CD4-positive, alpha-beta memory T cell (primary cell): ENCODE measurements at regions of chr3 and their contacts with region 1.

Region 1: GRCh38 chr3:152298393-152299242 is 29.9 kb downstream of the MBNL1 start:
- DNase-seq: peak; percentile 81 to 84 (median 82)
- H3K4me3 ChIP-seq: peak overlapping the region; percentile 23 to 29
- H3K4me3 Mint-ChIP-seq: peak overlapping the region; percentile 64 to 87 (median 78)
- H3K27ac ChIP-seq: peak overlapping the region; percentile 54
- H3K27ac Mint-ChIP-seq: peak overlapping the region; percentile 88 to 97 (median 92)
- H3K4me1 ChIP-seq: peaks cover 98% of the 10 kb centered on the region
- H3K4me1 Mint-ChIP-seq: peaks cover 62 to 82% (median 72%) of the 10 kb centered on the region in 4 donors
- H3K27me3 ChIP-seq: no peaks in the 10 kb centered on the region
- H3K27me3 Mint-ChIP-seq: no peaks in the 10 kb centered on the region

Region 2: DNA sequence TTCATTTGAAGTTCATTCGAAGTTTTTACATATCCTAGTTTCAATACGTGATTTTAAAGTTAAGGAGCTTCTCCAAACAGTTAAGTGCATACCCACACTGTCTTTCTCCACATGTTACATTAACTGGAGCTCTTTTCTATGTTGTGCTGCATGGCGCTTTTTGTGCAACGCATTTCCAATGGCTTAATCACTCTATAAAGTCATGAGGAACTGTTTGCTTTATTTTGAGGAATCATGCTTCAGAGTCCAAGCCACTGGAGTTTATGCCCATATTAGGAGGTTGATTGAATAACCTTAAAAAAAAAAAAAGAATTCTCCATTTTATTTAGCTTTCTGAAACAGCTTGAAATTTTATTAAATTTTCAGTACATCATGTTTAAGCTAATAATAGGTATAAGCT is 139.3 kb before region 1 on chr3:
- CTCF ChIA-PET with region 1: no interaction called
- POLR2A ChIA-PET with region 1: no interaction called
- intact Hi-C with region 1: no loop called
- DNase-seq: no peak
- H3K4me3 ChIP-seq: no peak overlapping the region
- H3K4me3 Mint-ChIP-seq: no peak overlapping the region
- H3K27ac ChIP-seq: no peak overlapping the region
- H3K27ac Mint-ChIP-seq: no peak overlapping the region
- H3K4me1 ChIP-seq: no peaks in the 10 kb centered on the region
- H3K4me1 Mint-ChIP-seq: peaks cover 0 to 6% (median 4%) of the 10 kb centered on the region in 4 donors
- H3K27me3 ChIP-seq: no peaks in the 10 kb centered on the region
- H3K27me3 Mint-ChIP-seq: no peaks in the 10 kb centered on the region

Region 3: DNA sequence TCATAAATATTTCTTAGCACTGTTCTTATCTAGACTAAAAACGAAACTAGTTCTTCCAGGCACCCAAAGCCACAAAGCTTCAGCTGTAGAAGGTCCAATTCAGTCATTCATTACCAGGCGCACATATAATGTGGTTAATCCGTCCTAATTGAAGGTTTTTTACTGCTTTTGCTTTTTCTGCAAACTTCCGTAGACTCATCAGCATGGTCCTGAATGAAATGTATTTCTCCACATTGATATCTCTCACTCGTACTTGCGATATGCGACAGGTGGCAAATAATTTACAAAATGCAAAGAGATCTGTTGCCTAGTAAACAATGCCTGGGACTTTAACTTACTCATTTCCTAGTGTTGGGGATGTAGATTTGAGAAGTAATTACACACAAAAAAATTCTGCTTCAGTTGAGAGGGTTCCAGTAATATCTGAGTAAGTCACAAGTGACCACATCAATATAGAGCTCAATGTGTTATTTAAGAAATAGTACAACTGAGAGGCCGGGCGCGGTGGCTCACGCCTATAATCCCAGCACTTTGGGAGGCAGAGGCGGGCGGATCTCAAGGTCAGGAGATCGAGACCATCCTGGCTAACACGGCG is 104.8 kb before region 1 on chr3:
- CTCF ChIA-PET with region 1: interaction called, 4 read pairs
- POLR2A ChIA-PET with region 1: interaction called, 14 read pairs
- intact Hi-C with region 1: no loop called
- DNase-seq: peak; percentile 63 to 79 (median 68)
- H3K4me3 ChIP-seq: peak overlapping the region; percentile 31 to 37
- H3K4me3 Mint-ChIP-seq: peak overlapping the region; percentile 81 to 97 (median 90)
- H3K27ac ChIP-seq: peak overlapping the region; percentile 62
- H3K27ac Mint-ChIP-seq: peak overlapping the region; percentile 89 to 98 (median 92)
- H3K4me1 ChIP-seq: peaks cover 82% of the 10 kb centered on the region
- H3K4me1 Mint-ChIP-seq: peaks cover 60 to 85% (median 72%) of the 10 kb centered on the region in 4 donors
- H3K27me3 ChIP-seq: no peaks in the 10 kb centered on the region
- H3K27me3 Mint-ChIP-seq: no peaks in the 10 kb centered on the region

Region 4: DNA sequence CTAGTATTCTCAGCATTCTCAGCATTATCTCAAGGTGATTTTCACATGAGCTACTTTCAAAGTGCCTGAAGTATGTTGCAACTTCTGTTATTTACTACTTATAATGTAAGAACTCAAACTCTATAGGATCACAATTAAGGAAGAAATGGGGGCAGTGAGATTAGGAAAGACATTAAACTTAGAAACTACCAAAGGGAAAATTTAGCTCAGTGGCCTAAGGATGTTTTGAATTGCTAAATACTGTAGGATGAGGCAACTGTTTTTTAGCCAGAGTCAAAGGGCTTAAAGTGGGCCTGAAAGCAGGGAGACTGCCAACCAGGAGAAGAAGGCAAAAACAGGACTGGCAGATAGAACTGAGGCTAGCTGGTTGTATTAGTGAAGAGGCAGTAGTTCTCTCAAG is 85.4 kb before region 1 on chr3:
- CTCF ChIA-PET with region 1: no interaction called
- POLR2A ChIA-PET with region 1: no interaction called
- intact Hi-C with region 1: no loop called
- DNase-seq: no peak
- H3K4me3 ChIP-seq: no peak overlapping the region
- H3K4me3 Mint-ChIP-seq: peak overlapping the region in 2 of 8 donors; percentile 13 to 33
- H3K27ac ChIP-seq: no peak overlapping the region
- H3K27ac Mint-ChIP-seq: peak overlapping the region; percentile 1 to 80 (median 18)
- H3K4me1 ChIP-seq: peaks cover 50% of the 10 kb centered on the region
- H3K4me1 Mint-ChIP-seq: peaks cover 45 to 65% (median 56%) of the 10 kb centered on the region in 4 donors
- H3K27me3 ChIP-seq: no peaks in the 10 kb centered on the region
- H3K27me3 Mint-ChIP-seq: no peaks in the 10 kb centered on the region

Region 5: GRCh38 chr3:152281133-152281713 is 17.4 kb before region 1 on chr3:
- CTCF ChIA-PET with region 1: interaction called, 4 read pairs
- POLR2A ChIA-PET with region 1: interaction called, 23 read pairs
- intact Hi-C with region 1: loop called (anchors 1 kb)
- DNase-seq: no peak
- H3K4me3 ChIP-seq: no peak overlapping the region
- H3K4me3 Mint-ChIP-seq: peak overlapping the region; percentile 15 to 87 (median 70)
- H3K27ac ChIP-seq: peak overlapping the region; percentile 61
- H3K27ac Mint-ChIP-seq: peak overlapping the region; percentile 62 to 88 (median 76)
- H3K4me1 ChIP-seq: peaks cover 97% of the 10 kb centered on the region
- H3K4me1 Mint-ChIP-seq: peaks cover 61 to 85% (median 72%) of the 10 kb centered on the region in 4 donors
- H3K27me3 ChIP-seq: no peaks in the 10 kb centered on the region
- H3K27me3 Mint-ChIP-seq: no peaks in the 10 kb centered on the region

Region 6: GRCh38 chr3:152309535-152310307 is 11.1 kb after region 1 on chr3:
- CTCF ChIA-PET with region 1: interaction called, 3 read pairs
- POLR2A ChIA-PET with region 1: interaction called, 18 read pairs
- intact Hi-C with region 1: no loop called
- DNase-seq: peak in 3 of 5 donors; percentile 35 to 50 (median 44)
- H3K4me3 ChIP-seq: no peak overlapping the region
- H3K4me3 Mint-ChIP-seq: peak overlapping the region; percentile 4 to 62 (median 44)
- H3K27ac ChIP-seq: peak overlapping the region; percentile 33
- H3K27ac Mint-ChIP-seq: peak overlapping the region; percentile 39 to 90 (median 67)
- H3K4me1 ChIP-seq: peaks cover 88% of the 10 kb centered on the region
- H3K4me1 Mint-ChIP-seq: peaks cover 59 to 83% (median 70%) of the 10 kb centered on the region in 4 donors
- H3K27me3 ChIP-seq: no peaks in the 10 kb centered on the region
- H3K27me3 Mint-ChIP-seq: no peaks in the 10 kb centered on the region

Region 7: DNA sequence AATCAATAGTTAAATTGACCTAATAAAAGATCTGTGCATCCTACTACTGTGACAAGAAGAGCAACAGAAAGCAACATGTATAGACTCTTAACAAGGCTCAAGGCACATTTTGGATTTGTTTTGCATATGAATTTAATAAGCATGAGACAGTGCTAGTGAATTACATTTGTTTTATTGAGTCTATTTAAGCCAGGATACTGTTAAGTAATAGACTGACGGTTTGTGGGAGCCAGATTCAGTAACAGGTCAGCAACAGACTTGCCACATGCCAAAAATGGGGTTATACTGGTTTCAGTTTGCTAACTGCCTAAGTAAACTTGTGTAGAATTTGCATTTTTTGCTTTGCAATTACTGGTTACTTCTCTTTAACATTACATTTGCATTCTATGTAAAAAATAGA is 24.1 kb after region 1 on chr3:
- CTCF ChIA-PET with region 1: interaction called, 3 read pairs
- POLR2A ChIA-PET with region 1: interaction called, 9 read pairs
- intact Hi-C with region 1: loop called (anchors 2 kb)
- DNase-seq: no peak
- H3K4me3 ChIP-seq: no peak overlapping the region
- H3K4me3 Mint-ChIP-seq: peak overlapping the region; percentile 11 to 74 (median 68)
- H3K27ac ChIP-seq: peak overlapping the region; percentile 52
- H3K27ac Mint-ChIP-seq: peak overlapping the region; percentile 44 to 93 (median 79)
- H3K4me1 ChIP-seq: peaks cover 95% of the 10 kb centered on the region
- H3K4me1 Mint-ChIP-seq: peaks cover 62 to 90% (median 73%) of the 10 kb centered on the region in 4 donors
- H3K27me3 ChIP-seq: no peaks in the 10 kb centered on the region
- H3K27me3 Mint-ChIP-seq: no peaks in the 10 kb centered on the region

Region 8: DNA sequence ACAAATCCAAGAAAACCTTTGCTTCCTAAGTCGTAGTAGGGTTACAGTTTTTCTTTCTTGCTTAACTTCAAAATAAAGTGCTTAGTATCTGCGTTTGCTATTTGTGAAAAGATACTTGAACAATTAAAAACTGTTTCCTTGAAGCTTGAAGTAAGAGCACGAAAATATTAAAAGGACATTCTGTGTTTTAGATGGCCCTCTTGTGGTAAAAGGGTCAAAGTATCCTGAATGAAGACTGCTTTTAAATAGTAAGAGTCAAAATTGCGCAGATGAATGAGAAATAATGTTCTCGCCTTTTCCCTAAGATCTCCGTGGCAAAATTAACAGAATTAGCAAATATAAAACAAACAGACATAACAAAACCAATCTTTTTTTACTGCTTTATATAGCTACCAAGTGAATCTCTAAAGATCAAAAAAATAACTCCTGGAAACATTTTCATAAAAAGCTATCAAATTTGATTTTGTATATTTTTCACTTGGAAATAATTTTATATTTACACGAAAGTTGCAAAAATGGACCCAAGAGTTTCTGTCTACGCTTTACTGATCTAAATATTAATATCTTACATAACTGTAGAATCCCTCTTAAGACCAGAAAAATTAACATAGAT is 145.5 kb after region 1 on chr3:
- CTCF ChIA-PET with region 1: interaction called, 3 read pairs
- POLR2A ChIA-PET with region 1: no interaction called
- intact Hi-C with region 1: loop called (anchors 10 kb)
- DNase-seq: peak in 4 of 5 donors; percentile 33 to 43 (median 38)
- H3K4me3 ChIP-seq: no peak overlapping the region
- H3K4me3 Mint-ChIP-seq: peak overlapping the region in 4 of 8 donors; percentile 1 to 47 (median 12)
- H3K27ac ChIP-seq: peak overlapping the region; percentile 6
- H3K27ac Mint-ChIP-seq: peak overlapping the region in 6 of 7 donors; percentile 17 to 92 (median 56)
- H3K4me1 ChIP-seq: peaks cover 89% of the 10 kb centered on the region
- H3K4me1 Mint-ChIP-seq: peaks cover 49 to 77% (median 60%) of the 10 kb centered on the region in 4 donors
- H3K27me3 ChIP-seq: no peaks in the 10 kb centered on the region
- H3K27me3 Mint-ChIP-seq: no peaks in the 10 kb centered on the region